Transverse colon (tissue), 4 donors: ENCODE measurements at regions of chr19 and their contacts with region 1.

Region 1: GRCh38 chr19:2648528-2648937 is 54.0 kb downstream of the GNG7 start:
- DNase-seq: peak; percentile 86
- H3K4me3 ChIP-seq: no peak overlapping the region
- H3K27ac ChIP-seq: no peak overlapping the region
- H3K4me1 ChIP-seq: no peaks in the 10 kb centered on the region
- H3K27me3 ChIP-seq: no peaks in the 10 kb centered on the region
- CTCF ChIP-seq: peak; percentile 82 to 96 (median 83)
- EP300 ChIP-seq: no peak
- POLR2A ChIP-seq: no peak

Region 2: DNA sequence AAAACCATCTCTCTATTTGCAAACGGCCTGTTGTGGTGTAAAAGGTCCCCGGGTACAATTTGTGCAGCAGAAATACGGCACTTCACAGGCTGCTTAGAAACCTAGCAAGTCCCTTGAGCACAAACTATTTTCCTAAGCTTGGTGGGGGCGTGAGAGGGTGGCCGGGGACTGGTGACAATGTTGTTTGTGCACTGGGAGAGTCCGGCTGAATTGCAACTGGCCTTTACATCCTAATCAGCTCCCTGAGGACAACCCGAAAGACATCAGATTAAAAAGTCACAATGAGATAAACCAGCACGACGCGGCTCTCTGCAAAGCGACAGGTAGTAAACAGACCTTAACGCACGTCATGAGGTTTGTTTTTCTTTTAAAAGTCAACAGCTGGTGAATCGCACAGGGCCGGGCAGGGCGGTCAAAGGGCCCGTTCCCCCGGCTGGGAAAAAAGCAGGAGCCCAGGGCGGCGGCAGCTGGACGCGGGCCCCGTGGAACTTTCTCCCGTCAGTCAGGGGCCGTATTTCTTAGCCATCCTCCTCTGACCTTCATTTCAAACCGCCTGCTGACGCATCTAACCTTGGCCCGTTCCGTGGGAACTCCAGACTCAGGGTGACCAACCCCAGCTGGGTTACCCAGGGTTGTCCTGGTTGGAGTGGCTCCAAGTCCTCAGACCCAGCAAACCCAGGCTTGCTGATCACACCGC is 60.3 kb before region 1 on chr19:
- in situ Hi-C with region 1: no loop called
- intact Hi-C with region 1: no loop called
- DNase-seq: peak; percentile 70
- H3K4me3 ChIP-seq: no peak overlapping the region
- H3K27ac ChIP-seq: peak overlapping the region; percentile 41 to 69 (median 51)
- H3K4me1 ChIP-seq: peaks cover 0 to 30% (median 12%) of the 10 kb centered on the region in 4 donors
- H3K27me3 ChIP-seq: no peaks in the 10 kb centered on the region
- CTCF ChIP-seq: no peak
- EP300 ChIP-seq: no peak
- POLR2A ChIP-seq: no peak

Region 3: GRCh38 chr19:2702162-2703076 is 53.9 kb after region 1 on chr19 and contains the start of gene GNG7:
- in situ Hi-C with region 1: no loop called
- intact Hi-C with region 1: no loop called
- DNase-seq: peak; percentile 96
- H3K4me3 ChIP-seq: peak within 1 kb of the TSS; percentile 45 to 78 (median 64)
- H3K27ac ChIP-seq: peak within 1 kb of the TSS; percentile 55 to 73 (median 67)
- H3K4me1 ChIP-seq: peaks cover 0 to 7% (median 4%) of the 10 kb centered on the region in 4 donors
- H3K27me3 ChIP-seq: no peaks in the 10 kb centered on the region
- CTCF ChIP-seq: no peak
- EP300 ChIP-seq: no peak
- POLR2A ChIP-seq: peak; percentile 26
- total RNA-seq, gene GNG7: 1.6 to 13.1 (median 4.0) TPM

Region 4: DNA sequence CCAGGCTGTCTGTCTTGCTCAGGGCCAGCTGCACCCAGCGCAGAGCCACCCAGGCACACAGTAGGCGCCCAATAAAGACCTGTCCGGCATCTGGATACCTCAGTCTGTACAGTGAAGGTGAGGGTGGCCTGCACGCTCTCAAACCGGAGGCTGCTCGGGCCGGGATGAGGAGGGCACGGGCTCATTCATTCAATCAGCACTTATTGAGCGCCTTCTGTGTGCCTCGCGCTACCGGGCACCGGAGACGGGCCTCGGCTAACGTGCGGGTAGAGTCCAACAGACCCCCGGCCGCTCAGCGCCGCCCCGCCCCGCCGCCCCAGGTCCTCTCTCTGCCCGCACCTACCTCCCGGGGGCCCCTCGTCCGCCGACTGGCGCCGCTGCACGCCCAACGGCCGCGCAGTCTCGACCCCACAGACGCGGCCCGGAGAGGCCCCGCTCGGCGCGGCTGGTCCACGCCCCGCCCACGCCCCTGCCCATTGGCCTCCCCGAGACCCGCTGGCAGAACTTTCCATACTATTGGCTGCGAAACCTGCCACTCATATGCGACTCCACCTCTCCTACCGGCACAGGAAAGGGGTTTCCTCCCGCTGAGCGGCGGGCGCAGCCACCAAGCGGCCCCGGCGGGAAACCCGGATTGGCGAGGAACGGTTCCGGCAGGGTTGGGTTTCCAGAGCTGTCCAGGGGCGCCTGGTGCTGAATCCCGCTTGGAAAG is 91.2 kb after region 1 on chr19 and contains the start of gene SLC39A3:
- in situ Hi-C with region 1: loop called in 2 of 4 experiments (anchors 10 kb)
- intact Hi-C with region 1: no loop called
- DNase-seq: peak; percentile 99
- H3K4me3 ChIP-seq: peak within 1 kb of the TSS; percentile 80 to 94 (median 85)
- H3K27ac ChIP-seq: peak within 1 kb of the TSS; percentile 72 to 79 (median 75)
- H3K4me1 ChIP-seq: peaks cover 5 to 14% (median 7%) of the 10 kb centered on the region in 4 donors
- H3K27me3 ChIP-seq: peaks cover 12% of the 10 kb centered on the region
- CTCF ChIP-seq: peak in 4 of 5 experiments; percentile 21 to 52 (median 36)
- EP300 ChIP-seq: no peak
- POLR2A ChIP-seq: no peak
- total RNA-seq, gene SLC39A3: 10.1 to 40.4 (median 24.7) TPM

Region 5: DNA sequence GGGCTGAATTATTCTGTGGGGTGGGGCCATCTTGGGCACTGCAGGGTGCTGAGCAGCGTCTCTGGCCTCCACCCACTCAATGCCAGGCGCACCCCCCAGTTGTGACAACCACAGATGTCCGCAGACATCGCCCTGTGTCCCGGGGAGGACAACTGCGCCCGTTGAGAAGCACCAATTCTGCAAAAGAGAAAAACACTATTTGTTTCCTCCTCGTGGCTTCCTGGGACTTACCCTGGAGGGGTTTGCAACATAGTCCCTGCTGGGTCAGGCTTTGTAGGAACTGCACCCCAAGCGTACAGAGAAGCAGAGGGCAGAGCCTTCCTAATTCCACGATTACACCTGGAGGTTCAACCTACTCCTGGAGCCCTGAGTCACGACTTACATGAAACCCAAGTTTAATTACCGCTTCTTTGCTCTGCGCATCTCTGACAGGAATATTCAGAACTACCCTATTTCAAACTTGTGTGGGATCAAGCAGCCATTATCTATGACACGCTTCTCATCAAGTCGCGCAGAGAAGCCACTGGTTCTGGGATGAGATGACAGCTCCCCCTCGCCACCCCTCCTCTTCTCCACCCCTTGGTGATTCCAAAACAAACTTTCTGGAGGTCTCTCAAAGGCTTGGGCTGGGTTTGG is 102.4 kb after region 1 on chr19:
- in situ Hi-C with region 1: loop called (anchors 5 to 10 kb)
- intact Hi-C with region 1: loop called (anchors 5 kb)
- DNase-seq: no peak
- H3K4me3 ChIP-seq: no peak overlapping the region
- H3K27ac ChIP-seq: no peak overlapping the region
- H3K4me1 ChIP-seq: peaks cover 0 to 4% (median 1%) of the 10 kb centered on the region in 4 donors
- H3K27me3 ChIP-seq: no peaks in the 10 kb centered on the region
- CTCF ChIP-seq: no peak
- EP300 ChIP-seq: no peak
- POLR2A ChIP-seq: no peak

Region 6: GRCh38 chr19:2867025-2867991 is 218.8 kb after region 1 on chr19 and contains the start of gene ZNF556:
- in situ Hi-C with region 1: loop called in 2 of 4 experiments (anchors 5 to 10 kb)
- intact Hi-C with region 1: loop called (anchors 10 kb)
- DNase-seq: no peak
- H3K4me3 ChIP-seq: no peak within 1 kb of the TSS
- H3K27ac ChIP-seq: no peak within 1 kb of the TSS
- H3K4me1 ChIP-seq: no peaks in the 10 kb centered on the region
- H3K27me3 ChIP-seq: no peaks in the 10 kb centered on the region
- CTCF ChIP-seq: no peak
- EP300 ChIP-seq: no peak
- POLR2A ChIP-seq: no peak
- total RNA-seq, gene ZNF556: not detected